Spleen (tissue), 13 donors: ENCODE measurements at regions of chr1 and their contacts with region 1.

Region 1: DNA sequence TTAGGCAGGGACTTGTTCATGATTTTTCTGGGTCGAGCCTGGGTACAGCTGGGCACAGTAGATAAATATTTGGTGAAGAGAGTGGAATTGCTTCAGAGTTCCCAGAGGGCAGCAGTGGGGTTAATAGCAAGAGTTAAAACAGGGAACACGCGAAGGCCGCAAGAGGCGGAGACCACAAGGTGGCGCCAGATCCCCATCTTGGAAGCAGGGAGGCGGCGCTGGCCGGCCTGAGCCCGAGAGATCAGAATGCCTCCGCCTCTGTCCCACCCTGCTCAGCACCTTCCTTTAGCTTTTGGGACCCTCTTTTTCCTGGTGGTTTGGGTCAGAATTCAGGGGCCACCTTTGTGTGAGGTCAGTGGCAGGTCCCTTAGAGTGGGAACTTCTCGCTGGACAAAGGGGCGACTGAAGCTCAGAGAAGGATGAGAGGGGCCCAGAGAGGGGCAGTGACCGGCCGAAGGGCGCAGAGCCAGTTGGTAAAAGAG is 6.5 kb upstream of the PADI2 start:
- DNase-seq: peak; percentile 96
- H3K4me3 ChIP-seq: no peak overlapping the region
- H3K27ac ChIP-seq: peak overlapping the region in 1 of 8 donors; percentile 11
- H3K4me1 ChIP-seq: peaks cover 0 to 60% (median 24%) of the 10 kb centered on the region in 6 donors
- H3K27me3 ChIP-seq: peaks cover 0 to 9% (median 0%) of the 10 kb centered on the region in 7 donors
- CTCF ChIP-seq: peak; percentile 81 to 95 (median 91)
- POLR2A ChIP-seq: no peak

Region 2: DNA sequence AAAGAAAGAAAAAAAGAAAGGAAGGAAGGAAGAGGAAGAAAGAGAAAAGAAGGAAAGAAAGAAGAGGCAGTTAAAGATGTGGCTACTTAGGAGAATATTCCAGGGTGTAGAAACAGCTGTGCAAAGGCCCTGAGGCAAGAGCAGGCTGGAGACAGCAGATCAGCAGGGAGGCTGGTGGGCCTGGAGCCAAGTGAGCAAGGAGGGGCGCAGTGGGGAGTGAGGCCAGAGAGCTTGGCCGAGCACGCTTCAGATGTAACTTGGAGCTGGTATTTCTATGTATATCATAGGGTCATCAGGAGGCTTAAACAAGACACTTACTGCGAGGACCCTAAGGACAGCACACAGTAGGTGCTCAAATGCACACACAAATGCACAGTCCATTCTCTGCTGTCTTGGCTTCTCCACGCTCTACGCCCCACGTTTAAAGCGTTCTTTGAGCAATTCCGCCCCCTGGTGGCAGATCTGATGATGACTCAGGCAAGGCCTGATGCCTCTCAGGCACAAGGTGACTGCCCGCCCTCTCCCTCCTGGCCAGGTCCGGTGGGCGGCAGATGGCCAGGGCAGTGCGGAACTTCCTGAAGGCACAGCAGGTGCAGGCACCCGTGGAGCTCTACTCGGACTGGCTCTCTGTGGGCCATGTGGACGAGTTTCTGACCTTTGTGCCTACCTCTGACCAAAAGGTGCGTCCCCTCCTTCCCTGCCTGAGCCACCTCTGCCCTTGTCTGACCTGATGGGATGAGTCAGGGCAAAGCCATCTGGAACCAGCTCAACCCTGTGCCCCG is 111.2 kb after region 1 on chr1:
- intact Hi-C with region 1: loop called (anchors 2 kb)
- DNase-seq: peak; percentile 95
- H3K4me3 ChIP-seq: no peak overlapping the region
- H3K27ac ChIP-seq: no peak overlapping the region
- H3K4me1 ChIP-seq: peaks cover 0 to 16% (median 6%) of the 10 kb centered on the region in 6 donors
- H3K27me3 ChIP-seq: peaks cover 0 to 8% (median 0%) of the 10 kb centered on the region in 7 donors
- CTCF ChIP-seq: peak; percentile 86 to 98 (median 93)
- POLR2A ChIP-seq: no peak

Region 3: GRCh38 chr1:17348125-17348979 is 222.6 kb after region 1 on chr1:
- intact Hi-C with region 1: no loop called
- DNase-seq: no peak
- H3K4me3 ChIP-seq: no peak overlapping the region
- H3K27ac ChIP-seq: no peak overlapping the region
- H3K4me1 ChIP-seq: no peaks in the 10 kb centered on the region
- H3K27me3 ChIP-seq: peaks cover 0 to 38% (median 0%) of the 10 kb centered on the region in 7 donors
- CTCF ChIP-seq: no peak
- POLR2A ChIP-seq: no peak

Region 4: DNA sequence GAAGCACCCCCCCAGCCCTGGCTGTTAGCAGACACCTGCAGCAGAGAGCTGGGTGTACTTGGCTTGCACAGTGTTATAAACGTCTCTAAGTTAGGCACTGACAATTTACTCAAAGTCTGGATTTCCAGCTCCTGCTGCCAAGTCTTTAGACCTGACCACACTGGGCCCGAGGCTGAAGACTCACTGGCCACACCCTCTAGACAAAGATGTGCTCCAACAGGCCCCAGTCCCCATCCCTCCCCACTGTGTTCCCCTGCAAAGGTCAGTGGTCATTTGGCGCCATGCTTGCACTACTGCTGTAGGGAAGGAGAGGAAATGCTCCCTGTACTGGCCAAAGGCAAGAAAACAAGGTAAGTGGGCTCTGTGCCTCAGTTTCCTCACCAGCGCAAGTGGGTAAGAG is 277.3 kb after region 1 on chr1:
- intact Hi-C with region 1: no loop called
- DNase-seq: no peak
- H3K4me3 ChIP-seq: no peak overlapping the region
- H3K27ac ChIP-seq: no peak overlapping the region
- H3K4me1 ChIP-seq: no peaks in the 10 kb centered on the region
- H3K27me3 ChIP-seq: no peaks in the 10 kb centered on the region
- CTCF ChIP-seq: no peak
- POLR2A ChIP-seq: no peak